ENCODE measurements at regions of chr3 and their contacts with region 1.

Region 1: DNA sequence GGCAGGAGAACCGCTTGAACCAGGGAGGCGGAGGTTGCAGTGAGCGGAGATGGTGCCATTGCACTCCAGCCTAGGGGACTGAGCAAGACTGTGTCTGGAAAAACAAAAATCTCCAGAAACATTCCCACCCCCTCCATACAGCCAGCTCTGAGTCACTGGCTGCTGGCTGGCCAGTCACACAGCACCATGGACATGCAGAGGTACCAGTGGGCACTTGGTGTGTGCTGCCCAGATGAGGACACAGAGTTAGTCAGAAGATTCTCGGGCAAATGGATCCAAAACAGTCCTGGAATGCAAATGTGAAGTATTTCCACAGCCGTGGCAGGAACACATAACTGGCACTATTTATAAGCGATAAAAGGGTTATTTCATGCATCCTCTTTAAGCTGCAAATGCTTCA is 44.6 kb downstream of the BDH1 start:
- DNase-seq: no peak
- H3K4me3 ChIP-seq: no peak overlapping the region
- H3K27ac ChIP-seq: no peak overlapping the region
- H3K4me1 ChIP-seq: peaks cover 4% of the 10 kb centered on the region
- H3K27me3 ChIP-seq: no peaks in the 10 kb centered on the region
- CTCF ChIP-seq: no peak
- POLR2A ChIP-seq: no peak

Region 2: GRCh38 chr3:197038679-197039462 is 472.3 kb before region 1 on chr3:
- CTCF ChIA-PET with region 1: no interaction called
- POLR2A ChIA-PET with region 1: no interaction called
- dilution Hi-C with region 1: no loop called
- intact Hi-C with region 1: no loop called
- DNase-seq: no peak
- H3K4me3 ChIP-seq: no peak overlapping the region
- H3K27ac ChIP-seq: no peak overlapping the region
- H3K4me1 ChIP-seq: no peaks in the 10 kb centered on the region
- H3K27me3 ChIP-seq: peaks cover 0 to 3% of the 10 kb centered on the region in 2 experiments
- CTCF ChIP-seq: no peak
- POLR2A ChIP-seq: no peak

Region 3: GRCh38 chr3:197224034-197224444 is 287.1 kb before region 1 on chr3:
- CTCF ChIA-PET with region 1: interaction called, 31 read pairs
- POLR2A ChIA-PET with region 1: no interaction called
- dilution Hi-C with region 1: no loop called
- intact Hi-C with region 1: loop called (anchors 1 kb)
- DNase-seq: peak; percentile 64
- H3K4me3 ChIP-seq: no peak overlapping the region
- H3K27ac ChIP-seq: no peak overlapping the region
- H3K4me1 ChIP-seq: no peaks in the 10 kb centered on the region
- H3K27me3 ChIP-seq: no peaks in the 10 kb centered on the region
- CTCF ChIP-seq: peak; percentile 26
- POLR2A ChIP-seq: no peak

Measured in endothelial cell of umbilical vein (primary cell).